ENCODE measurements at regions of chr2 and their contacts with region 1.

Region 1: GRCh38 chr2:127479219-127479825 is 47.0 kb downstream of the IWS1 start:
- DNase-seq: peak; percentile 31 to 72
- ATAC-seq: peak; percentile 92 to 94
- H3K4me3 ChIP-seq: no peak overlapping the region
- H3K27ac ChIP-seq: no peak overlapping the region
- H3K4me1 ChIP-seq: no peaks in the 10 kb centered on the region
- CTCF ChIP-seq: peak; percentile 90
- EP300 ChIP-seq: no peak
- POLR2A ChIP-seq: no peak
- RAD21 ChIP-seq: peak; percentile 84 to 89

Region 2: GRCh38 chr2:127217485-127218321 is 261.6 kb before region 1 on chr2:
- CTCF ChIA-PET with region 1: interaction called, 10 read pairs
- POLR2A ChIA-PET with region 1: no interaction called
- DNase-seq: peak; percentile 71 to 93
- ATAC-seq: peak; percentile 88
- H3K4me3 ChIP-seq: peak overlapping the region; percentile 89
- H3K27ac ChIP-seq: peak overlapping the region; percentile 93 to 95
- H3K4me1 ChIP-seq: peaks cover 13% of the 10 kb centered on the region
- CTCF ChIP-seq: no peak
- EP300 ChIP-seq: no peak
- POLR2A ChIP-seq: no peak; the same call in 1 of the 2 replicates
- RAD21 ChIP-seq: 0 out of 5 replicates have a peak, but pooled peaks of 1 of the 2 experiments have one; percentile 2

Region 3: GRCh38 chr2:127324635-127325034 is 154.7 kb before region 1 on chr2:
- CTCF ChIA-PET with region 1: interaction called, 40 read pairs
- POLR2A ChIA-PET with region 1: no interaction called
- DNase-seq: peak; percentile 25 to 63
- ATAC-seq: peak; percentile 70 to 85; a peak in 4 of 6 replicates
- H3K4me3 ChIP-seq: no peak overlapping the region
- H3K27ac ChIP-seq: no peak overlapping the region
- H3K4me1 ChIP-seq: peaks cover 12% of the 10 kb centered on the region; the same call in 2 of the 3 replicates
- CTCF ChIP-seq: peak; percentile 83
- EP300 ChIP-seq: no peak
- POLR2A ChIP-seq: no peak
- RAD21 ChIP-seq: peak; percentile 85 to 88

Region 4: DNA sequence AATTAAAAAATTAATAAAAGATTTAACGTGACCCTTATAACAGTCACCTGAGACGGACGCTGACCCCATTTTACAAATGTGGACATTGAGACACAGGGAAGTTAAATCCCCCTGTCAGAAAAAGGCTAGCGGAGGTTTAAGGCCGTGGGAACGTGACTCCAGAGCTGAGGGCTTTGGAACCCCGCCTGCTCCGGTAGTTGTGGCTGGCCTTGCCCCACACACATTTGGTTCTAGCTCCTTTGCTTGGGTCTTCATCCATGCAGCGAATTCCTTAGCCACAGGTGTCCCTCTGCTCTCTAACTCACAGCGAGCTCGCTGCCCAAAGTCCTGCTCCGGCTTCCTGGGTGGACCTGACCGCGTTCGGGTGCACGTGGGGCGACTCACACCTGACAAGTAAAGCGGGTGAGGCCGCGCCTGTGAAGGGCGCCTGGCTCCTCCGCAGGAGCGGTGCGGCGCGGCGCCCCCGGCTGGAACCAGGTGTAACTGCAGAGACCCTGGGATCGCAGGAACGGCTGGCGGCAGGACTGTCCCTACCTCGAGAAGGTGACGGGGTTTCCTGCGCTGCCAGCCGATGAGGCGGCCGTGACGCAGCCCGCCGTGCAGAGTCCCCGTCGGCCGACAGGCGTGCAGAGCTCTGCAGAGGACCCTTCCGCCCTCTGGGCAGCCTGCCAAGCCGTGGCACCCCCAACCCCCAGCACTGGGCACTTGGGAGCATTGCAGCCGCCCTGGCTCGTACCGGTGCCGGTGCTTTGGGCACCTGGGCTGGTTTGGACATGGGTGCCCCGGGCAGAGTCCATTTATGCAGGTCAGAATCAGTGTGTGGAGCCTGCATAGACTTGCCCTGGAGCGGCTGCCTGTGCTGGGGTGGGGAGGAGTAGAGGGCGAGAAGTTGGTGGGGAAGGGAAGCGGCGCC is 63.5 kb before region 1 on chr2:
- CTCF ChIA-PET with region 1: interaction called, 13 read pairs
- POLR2A ChIA-PET with region 1: no interaction called
- DNase-seq: peak; percentile 70 to 81
- ATAC-seq: peak; percentile 55 to 83
- H3K4me3 ChIP-seq: peak overlapping the region; percentile 31
- H3K27ac ChIP-seq: peak overlapping the region; percentile 84 to 97
- H3K4me1 ChIP-seq: peaks cover 56% of the 10 kb centered on the region
- CTCF ChIP-seq: peak; percentile 53; the same call in 2 of the 3 replicates
- EP300 ChIP-seq: no peak
- POLR2A ChIP-seq: no peak
- RAD21 ChIP-seq: peak; percentile 59 to 67

Region 5: GRCh38 chr2:127455566-127456493 is 23.5 kb before region 1 on chr2:
- CTCF ChIA-PET with region 1: interaction called, 14 read pairs
- POLR2A ChIA-PET with region 1: no interaction called
- DNase-seq: no peak
- ATAC-seq: no peak
- H3K4me3 ChIP-seq: no peak overlapping the region
- H3K27ac ChIP-seq: peak overlapping the region; percentile 57 to 77
- H3K4me1 ChIP-seq: peaks cover 23% of the 10 kb centered on the region
- CTCF ChIP-seq: no peak
- EP300 ChIP-seq: no peak
- POLR2A ChIP-seq: no peak
- RAD21 ChIP-seq: no peak

Region 6: GRCh38 chr2:127490283-127490682 is 11.0 kb after region 1 on chr2:
- CTCF ChIA-PET with region 1: interaction called, 22 read pairs
- POLR2A ChIA-PET with region 1: no interaction called
- DNase-seq: no peak
- ATAC-seq: no peak
- H3K4me3 ChIP-seq: no peak overlapping the region
- H3K27ac ChIP-seq: no peak overlapping the region
- H3K4me1 ChIP-seq: no peaks in the 10 kb centered on the region
- CTCF ChIP-seq: no peak
- EP300 ChIP-seq: no peak
- POLR2A ChIP-seq: no peak
- RAD21 ChIP-seq: no peak